GM12878 (cell line): ENCODE measurements at regions of chr10 and their contacts with region 1.

Region 1: GRCh38 chr10:90148116-90148855 is 446.9 kb downstream of the KIF20B start:
- DNase-seq: no peak
- ATAC-seq: peak; percentile 73
- H3K4me3 ChIP-seq: no peak overlapping the region
- H3K27ac ChIP-seq: no peak overlapping the region
- H3K4me1 ChIP-seq: no peaks in the 10 kb centered on the region
- H3K27me3 ChIP-seq: no peaks in the 10 kb centered on the region
- CTCF ChIP-seq: peak; percentile 51 to 57 (median 53)
- EP300 ChIP-seq: no peak
- POLR2A ChIP-seq: no peak
- RAD21 ChIP-seq: peak; percentile 77

Region 2: DNA sequence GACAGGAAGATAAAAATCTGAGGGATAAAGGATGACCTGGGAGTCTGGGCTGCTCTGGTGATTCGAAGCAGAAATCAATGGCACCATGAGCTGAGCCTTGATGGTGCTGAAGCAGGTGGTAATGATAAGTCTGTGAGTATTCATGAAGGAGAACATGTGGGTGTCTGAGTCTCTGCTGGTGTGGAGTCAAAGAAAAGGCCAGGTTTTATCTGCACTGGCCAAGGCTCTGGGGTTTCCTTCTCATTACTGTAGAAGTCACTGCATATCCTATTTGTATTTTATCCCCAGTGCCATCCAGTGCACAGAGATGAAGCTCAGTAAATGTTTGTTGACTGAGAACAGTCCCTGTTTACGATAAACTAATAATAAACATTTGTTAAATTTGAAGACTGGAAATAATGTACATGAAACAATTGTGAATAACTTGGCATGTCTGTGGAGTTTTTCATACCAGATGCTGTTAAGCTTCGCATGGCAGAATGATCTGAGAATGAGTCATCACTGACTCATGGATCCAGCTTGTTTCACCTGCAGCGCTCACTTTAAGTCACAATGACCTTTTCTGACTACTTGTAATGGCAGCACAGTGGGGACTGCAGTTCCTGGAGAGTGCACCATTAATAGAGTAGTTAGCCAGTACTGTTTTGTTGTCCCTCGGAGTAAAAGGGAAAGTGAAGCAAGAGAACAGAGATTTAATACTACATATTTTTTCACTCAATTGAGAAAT is 171.1 kb after region 1 on chr10:
- CTCF ChIA-PET with region 1: interaction called, 6 read pairs
- POLR2A ChIA-PET with region 1: no interaction called
- RAD21 ChIA-PET with region 1: no interaction called
- SMC1A ChIA-PET with region 1: no interaction called
- in situ Hi-C with region 1: no loop called
- intact Hi-C with region 1: loop called (anchors 10 kb)
- DNase-seq: peak; percentile 48
- ATAC-seq: peak; percentile 98
- H3K4me3 ChIP-seq: no peak overlapping the region
- H3K27ac ChIP-seq: no peak overlapping the region
- H3K4me1 ChIP-seq: no peaks in the 10 kb centered on the region
- H3K27me3 ChIP-seq: no peaks in the 10 kb centered on the region
- CTCF ChIP-seq: no peak
- EP300 ChIP-seq: peak in 1 of 2 experiments; percentile 52; a peak in 1 of 4 replicates
- POLR2A ChIP-seq: no peak
- RAD21 ChIP-seq: no peak

Region 3: DNA sequence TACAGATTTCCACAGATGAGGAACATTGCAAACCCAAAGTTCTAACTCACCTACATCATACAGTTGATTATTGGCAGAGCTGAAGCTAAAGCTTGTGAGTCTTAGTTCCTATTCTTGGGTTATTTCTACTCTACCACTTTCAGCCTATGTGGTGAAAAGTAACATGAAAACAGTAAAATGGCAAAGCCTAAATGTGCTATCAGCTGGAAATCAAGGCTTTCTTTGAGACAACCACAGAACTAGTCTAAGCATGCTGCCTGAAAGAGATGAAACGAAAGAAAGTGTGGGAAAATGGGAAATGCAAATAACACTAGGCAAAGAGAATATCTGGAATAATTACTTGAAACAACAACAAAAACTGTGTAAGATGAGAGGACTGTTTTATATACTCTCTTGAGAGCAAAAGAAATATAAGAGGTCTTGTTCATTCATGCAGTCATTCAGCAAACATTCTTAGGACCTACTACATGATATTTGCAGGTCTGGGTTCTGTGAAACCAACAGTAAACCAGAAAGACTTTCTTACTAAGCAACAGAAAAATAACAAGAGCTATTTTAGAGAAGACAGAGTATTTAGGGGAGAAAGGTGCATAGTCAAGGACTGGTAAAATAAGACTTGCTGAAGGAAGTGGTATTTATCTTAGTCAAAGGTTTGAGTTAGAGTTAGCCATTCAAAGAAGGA is 272.5 kb after region 1 on chr10:
- CTCF ChIA-PET with region 1: no interaction called
- POLR2A ChIA-PET with region 1: no interaction called
- RAD21 ChIA-PET with region 1: no interaction called
- SMC1A ChIA-PET with region 1: no interaction called
- in situ Hi-C with region 1: no loop called
- intact Hi-C with region 1: loop called (anchors 10 kb)
- DNase-seq: peak; percentile 69
- ATAC-seq: peak; percentile 91
- H3K4me3 ChIP-seq: no peak overlapping the region
- H3K27ac ChIP-seq: peak overlapping the region; percentile 6; the same call in 1 of the 2 replicates
- H3K4me1 ChIP-seq: no peaks in the 10 kb centered on the region; the same call in 1 of the 2 replicates
- H3K27me3 ChIP-seq: no peaks in the 10 kb centered on the region
- CTCF ChIP-seq: no peak
- EP300 ChIP-seq: 0 out of 4 replicates have a peak, but pooled peaks have one; percentile 26 to 46
- POLR2A ChIP-seq: no peak
- RAD21 ChIP-seq: no peak

Region 4: GRCh38 chr10:90592638-90593302 is 444.5 kb after region 1 on chr10:
- CTCF ChIA-PET with region 1: interaction called, 5 read pairs
- POLR2A ChIA-PET with region 1: no interaction called
- RAD21 ChIA-PET with region 1: no interaction called
- SMC1A ChIA-PET with region 1: interaction called, 3 read pairs
- in situ Hi-C with region 1: no loop called
- intact Hi-C with region 1: loop called (anchors 2 kb)
- DNase-seq: peak; percentile 8
- ATAC-seq: peak; percentile 94
- H3K4me3 ChIP-seq: no peak overlapping the region
- H3K27ac ChIP-seq: no peak overlapping the region
- H3K4me1 ChIP-seq: no peaks in the 10 kb centered on the region
- H3K27me3 ChIP-seq: no peaks in the 10 kb centered on the region
- CTCF ChIP-seq: peak; percentile 51 to 56 (median 51)
- EP300 ChIP-seq: no peak
- POLR2A ChIP-seq: no peak
- RAD21 ChIP-seq: peak; percentile 80

Region 5: GRCh38 chr10:90652519-90652918 is 504.2 kb after region 1 on chr10:
- CTCF ChIA-PET with region 1: interaction called, 3 read pairs
- POLR2A ChIA-PET with region 1: no interaction called
- RAD21 ChIA-PET with region 1: no interaction called
- SMC1A ChIA-PET with region 1: interaction called, 3 read pairs
- in situ Hi-C with region 1: no loop called
- intact Hi-C with region 1: loop called (anchors 5 kb)
- DNase-seq: no peak
- ATAC-seq: peak; percentile 62
- H3K4me3 ChIP-seq: no peak overlapping the region
- H3K27ac ChIP-seq: no peak overlapping the region
- H3K4me1 ChIP-seq: no peaks in the 10 kb centered on the region
- H3K27me3 ChIP-seq: no peaks in the 10 kb centered on the region
- CTCF ChIP-seq: peak; percentile 27 to 37 (median 35); a peak in 4 of 6 replicates
- EP300 ChIP-seq: no peak
- POLR2A ChIP-seq: no peak
- RAD21 ChIP-seq: peak; percentile 50

Region 6: GRCh38 chr10:90857635-90858460 is 709.6 kb after region 1 on chr10 and contains the start of gene HTR7:
- CTCF ChIA-PET with region 1: no interaction called
- POLR2A ChIA-PET with region 1: no interaction called
- RAD21 ChIA-PET with region 1: no interaction called
- SMC1A ChIA-PET with region 1: no interaction called
- in situ Hi-C with region 1: no loop called
- intact Hi-C with region 1: loop called (anchors 5 kb)
- DNase-seq: no peak
- ATAC-seq: peak; percentile 83
- H3K4me3 ChIP-seq: peak within 1 kb of the TSS; percentile 58; the same call in 1 of the 2 replicates
- H3K27ac ChIP-seq: no peak within 1 kb of the TSS
- H3K4me1 ChIP-seq: 0 out of 2 replicates have a peak, but pooled peaks cover 3% of the 10 kb centered on the region
- H3K27me3 ChIP-seq: peaks cover 0 to 10% of the 10 kb centered on the region in 2 experiments; a peak in 3 of 4 replicates
- CTCF ChIP-seq: peak; percentile 40 to 45 (median 43); a peak in 4 of 6 replicates
- EP300 ChIP-seq: no peak
- POLR2A ChIP-seq: no peak
- RAD21 ChIP-seq: no peak
- polyA plus RNA-seq, gene HTR7: 0.04 to 0.06 TPM